ENCODE measurements at regions of chr3 and their contacts with region 1.

Region 1: DNA sequence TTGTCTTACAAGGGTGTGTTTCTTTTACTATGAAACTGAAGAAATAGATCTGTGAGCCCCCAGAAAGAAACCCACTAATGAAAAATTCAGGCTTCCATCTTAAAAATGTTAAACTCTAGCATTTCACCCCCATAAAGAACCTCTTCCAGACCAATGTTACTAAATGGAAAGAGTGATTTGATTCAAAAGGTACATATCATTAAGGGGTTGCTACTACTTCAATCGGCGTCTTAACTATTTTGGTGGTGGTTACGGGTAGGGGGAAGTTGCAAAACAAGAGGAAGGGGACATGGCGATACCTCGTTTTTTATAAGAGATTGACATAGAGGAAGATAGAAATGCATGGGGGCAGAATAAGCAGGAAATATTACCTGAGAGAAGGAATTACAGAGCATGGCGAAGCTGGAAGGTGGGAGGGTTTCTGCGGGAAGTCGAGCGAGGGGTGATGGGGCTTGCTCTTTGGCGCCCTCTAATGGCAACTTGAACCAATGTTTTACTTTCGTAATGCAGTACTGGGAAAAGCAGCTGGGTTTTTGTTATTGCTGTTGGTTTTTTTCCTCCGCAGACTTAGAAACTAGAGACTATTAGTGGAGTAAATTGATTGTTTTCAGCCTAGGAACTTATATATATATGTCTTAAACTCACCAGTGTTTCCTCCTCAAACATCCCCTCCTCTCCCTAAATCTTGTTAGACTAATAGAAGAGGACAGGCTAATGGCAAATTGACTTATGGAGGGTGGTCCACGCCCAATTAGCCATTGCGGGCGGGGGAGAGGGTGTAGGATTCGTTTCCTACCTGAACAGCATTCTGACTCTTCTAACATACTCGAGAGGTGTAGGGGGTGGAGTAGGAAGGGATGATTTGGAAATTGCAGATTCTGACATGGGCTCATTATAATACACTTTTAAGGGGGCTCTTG is 11.3 kb upstream of the SOX2 start:
- DNase-seq: peak in 2 of 3 donors; percentile 50 to 58
- ATAC-seq: peak; percentile 67 to 71
- H3K4me3 ChIP-seq: peak overlapping the region; percentile 39
- H3K27ac ChIP-seq: no peak overlapping the region
- H3K4me1 ChIP-seq: no peaks in the 10 kb centered on the region
- H3K27me3 ChIP-seq: peaks cover 9% of the 10 kb centered on the region

Region 2: GRCh38 chr3:181326637-181327223 is 373.7 kb before region 1 on chr3:
- intact Hi-C with region 1: loop called in 3 of 4 experiments (anchors 10 kb)
- DNase-seq: peak in 1 of 3 donors; percentile 9
- ATAC-seq: no peak
- H3K4me3 ChIP-seq: no peak overlapping the region
- H3K27ac ChIP-seq: no peak overlapping the region
- H3K4me1 ChIP-seq: no peaks in the 10 kb centered on the region
- H3K27me3 ChIP-seq: no peaks in the 10 kb centered on the region

Region 3: DNA sequence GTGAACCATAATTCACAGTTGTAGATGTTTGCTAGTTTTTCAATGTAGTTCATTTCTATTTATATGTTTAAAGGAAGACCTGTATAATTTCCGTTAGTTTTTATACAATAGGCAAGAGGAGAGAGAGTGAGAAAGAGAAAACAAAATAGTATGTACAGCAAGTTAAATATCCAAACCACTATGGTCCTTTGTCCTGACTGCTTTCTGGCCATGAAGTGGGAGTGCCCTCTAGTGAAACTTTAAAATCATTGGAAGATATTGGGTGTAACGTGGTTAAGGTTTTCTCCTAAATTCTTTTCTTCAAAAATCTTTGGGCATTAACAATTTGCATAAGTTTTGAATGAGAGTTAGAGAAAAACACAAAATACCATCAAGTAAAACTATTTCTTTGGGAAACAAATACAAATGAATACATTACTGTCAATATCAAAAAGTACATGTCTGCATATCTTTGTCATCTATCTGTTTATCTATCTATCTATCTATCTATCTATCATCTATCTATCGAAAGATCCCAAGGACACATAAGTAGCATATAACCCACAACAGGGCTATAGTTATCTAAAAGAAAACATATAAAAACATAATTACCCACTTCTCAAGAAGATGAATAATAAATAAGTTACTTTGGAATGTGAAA is 558.2 kb after region 1 on chr3:
- intact Hi-C with region 1: loop called in 1 of 4 experiments (anchors 10 kb)
- DNase-seq: no peak
- ATAC-seq: peak in 1 of 2 donors; percentile 47
- H3K4me3 ChIP-seq: no peak overlapping the region
- H3K27ac ChIP-seq: no peak overlapping the region
- H3K4me1 ChIP-seq: no peaks in the 10 kb centered on the region
- H3K27me3 ChIP-seq: no peaks in the 10 kb centered on the region

Region 4: GRCh38 chr3:182683453-182683852 is 983.0 kb after region 1 on chr3:
- intact Hi-C with region 1: loop called in 3 of 4 experiments (anchors 5 to 10 kb)
- DNase-seq: peak in 2 of 3 donors; percentile 26 to 56
- ATAC-seq: peak; percentile 82 to 89
- H3K4me3 ChIP-seq: peak overlapping the region; percentile 70
- H3K27ac ChIP-seq: no peak overlapping the region
- H3K4me1 ChIP-seq: no peaks in the 10 kb centered on the region
- H3K27me3 ChIP-seq: no peaks in the 10 kb centered on the region